H1 (cell line): ENCODE measurements at regions of chr4 and their contacts with region 1.

Region 1: GRCh38 chr4:177047070-177047850 is 254.5 kb upstream of the VEGFC start:
- DNase-seq: peak in 1 of 2 experiments; percentile 72
- H3K4me3 ChIP-seq: no peak overlapping the region
- H3K27ac ChIP-seq: no peak overlapping the region
- H3K4me1 ChIP-seq: no peaks in the 10 kb centered on the region
- H3K27me3 ChIP-seq: no peaks in the 10 kb centered on the region
- CTCF ChIP-seq: peak; percentile 56 to 71 (median 65)
- EP300 ChIP-seq: no peak
- POLR2A ChIP-seq: no peak
- RAD21 ChIP-seq: peak; percentile 71 to 78

Region 2: GRCh38 chr4:176377780-176378179 is 669.5 kb before region 1 on chr4:
- CTCF ChIA-PET with region 1: interaction called, 28 read pairs
- POLR2A ChIA-PET with region 1: no interaction called
- DNase-seq: no peak
- H3K4me3 ChIP-seq: no peak overlapping the region
- H3K27ac ChIP-seq: no peak overlapping the region
- H3K4me1 ChIP-seq: no peaks in the 10 kb centered on the region
- H3K27me3 ChIP-seq: peaks cover 0 to 1% (median 0%) of the 10 kb centered on the region in 4 experiments; a peak in 1 of 7 replicates
- CTCF ChIP-seq: peak in 2 of 3 experiments; percentile 26 to 51; a peak in 2 of 4 replicates
- EP300 ChIP-seq: no peak
- POLR2A ChIP-seq: no peak
- RAD21 ChIP-seq: peak; percentile 69 to 77

Region 3: DNA sequence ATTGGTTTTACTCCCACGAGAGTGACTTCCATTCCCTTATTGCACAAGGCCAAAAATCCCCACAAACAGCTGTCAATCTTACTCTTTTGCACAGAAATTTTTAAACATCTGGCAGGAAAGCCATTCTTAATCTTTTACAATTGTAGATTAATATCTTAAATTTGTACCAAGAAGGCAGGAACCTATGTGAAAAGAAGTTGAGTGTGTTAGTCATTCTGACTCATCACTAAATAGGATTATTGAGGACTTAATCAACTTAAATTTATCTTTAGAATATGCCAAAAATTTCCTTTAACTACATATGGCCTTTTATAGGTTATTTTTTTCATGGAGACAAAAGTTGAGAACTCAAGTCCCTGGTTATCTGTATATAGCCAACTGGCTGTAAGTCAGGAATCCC is 205.5 kb before region 1 on chr4:
- CTCF ChIA-PET with region 1: interaction called, 10 read pairs
- POLR2A ChIA-PET with region 1: no interaction called
- DNase-seq: no peak
- H3K4me3 ChIP-seq: no peak overlapping the region
- H3K27ac ChIP-seq: no peak overlapping the region
- H3K4me1 ChIP-seq: no peaks in the 10 kb centered on the region
- H3K27me3 ChIP-seq: no peaks in the 10 kb centered on the region
- CTCF ChIP-seq: no peak
- EP300 ChIP-seq: no peak
- POLR2A ChIP-seq: no peak
- RAD21 ChIP-seq: no peak

Region 4: DNA sequence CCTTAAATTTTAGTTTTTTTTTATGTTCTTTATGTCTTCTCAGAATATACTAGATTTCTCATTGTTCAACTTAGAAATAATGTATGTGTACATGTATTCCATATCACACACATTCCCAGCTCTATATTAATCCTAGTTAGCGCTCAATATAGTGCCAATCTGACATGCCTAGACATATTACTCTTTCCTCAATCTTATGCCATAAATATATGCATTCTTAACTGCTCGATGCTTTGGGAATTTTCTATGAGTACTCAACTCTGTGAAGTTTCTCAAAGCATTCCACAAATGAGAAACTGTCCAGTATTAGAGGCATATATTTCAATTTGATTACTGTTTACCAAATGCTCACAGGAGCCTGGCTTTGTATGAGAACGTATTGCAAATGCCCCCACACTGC is 23.3 kb before region 1 on chr4:
- CTCF ChIA-PET with region 1: interaction called, 21 read pairs
- POLR2A ChIA-PET with region 1: no interaction called
- DNase-seq: no peak
- H3K4me3 ChIP-seq: no peak overlapping the region
- H3K27ac ChIP-seq: no peak overlapping the region
- H3K4me1 ChIP-seq: no peaks in the 10 kb centered on the region
- H3K27me3 ChIP-seq: no peaks in the 10 kb centered on the region
- CTCF ChIP-seq: no peak
- EP300 ChIP-seq: no peak
- POLR2A ChIP-seq: no peak
- RAD21 ChIP-seq: no peak

Region 5: DNA sequence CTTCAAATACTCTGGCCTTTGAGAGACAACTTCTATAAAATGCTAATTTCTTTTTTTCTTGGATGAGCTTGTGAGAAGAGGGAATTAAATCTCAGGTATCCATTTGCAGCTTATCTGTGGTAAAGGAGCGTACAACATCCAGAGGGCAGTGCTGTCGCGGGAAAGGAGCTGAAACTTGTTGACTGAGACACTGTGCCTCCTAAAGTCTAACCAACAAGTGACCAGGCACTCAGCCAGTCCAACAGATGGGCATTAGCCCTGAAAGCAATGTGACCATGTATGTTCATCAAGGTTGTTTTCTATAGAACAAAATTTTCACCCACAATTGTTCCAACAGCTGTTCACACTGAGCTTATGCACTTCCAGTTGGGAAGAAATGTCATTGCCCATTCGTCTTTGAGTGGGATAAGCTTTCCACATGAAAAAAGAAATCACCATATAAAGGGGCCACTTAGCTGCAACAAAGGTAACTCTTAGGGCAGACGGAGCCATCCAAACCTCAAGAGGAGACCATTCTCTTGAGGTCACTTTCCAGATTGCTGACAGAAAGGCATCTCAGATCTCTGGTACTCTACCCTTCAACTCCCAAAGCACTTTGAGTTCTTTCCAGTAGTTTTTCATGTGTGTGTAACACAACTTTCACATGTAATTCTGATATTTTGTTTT is 17.6 kb after region 1 on chr4:
- CTCF ChIA-PET with region 1: interaction called, 10 read pairs
- POLR2A ChIA-PET with region 1: no interaction called
- DNase-seq: no peak
- H3K4me3 ChIP-seq: no peak overlapping the region
- H3K27ac ChIP-seq: no peak overlapping the region
- H3K4me1 ChIP-seq: peaks cover 0 to 2% (median 0%) of the 10 kb centered on the region in 4 experiments; a peak in 1 of 7 replicates
- H3K27me3 ChIP-seq: no peaks in the 10 kb centered on the region
- CTCF ChIP-seq: peak in 2 of 3 experiments; percentile 12 to 28; a peak in 2 of 4 replicates
- EP300 ChIP-seq: no peak
- POLR2A ChIP-seq: no peak
- RAD21 ChIP-seq: peak; percentile 33 to 46; a peak in 3 of 4 replicates

Region 6: GRCh38 chr4:177638871-177639270 is 591.6 kb after region 1 on chr4:
- CTCF ChIA-PET with region 1: no interaction called
- POLR2A ChIA-PET with region 1: no interaction called
- DNase-seq: no peak
- H3K4me3 ChIP-seq: no peak overlapping the region
- H3K27ac ChIP-seq: no peak overlapping the region
- H3K4me1 ChIP-seq: peaks cover 0 to 8% (median 1%) of the 10 kb centered on the region in 4 experiments; a peak in 2 of 7 replicates
- H3K27me3 ChIP-seq: peaks cover 0 to 1% (median 0%) of the 10 kb centered on the region in 4 experiments; a peak in 1 of 7 replicates
- CTCF ChIP-seq: no peak
- EP300 ChIP-seq: no peak
- POLR2A ChIP-seq: no peak
- RAD21 ChIP-seq: no peak